ENCODE measurements at regions of chr12 and their contacts with region 1.

Region 1: DNA sequence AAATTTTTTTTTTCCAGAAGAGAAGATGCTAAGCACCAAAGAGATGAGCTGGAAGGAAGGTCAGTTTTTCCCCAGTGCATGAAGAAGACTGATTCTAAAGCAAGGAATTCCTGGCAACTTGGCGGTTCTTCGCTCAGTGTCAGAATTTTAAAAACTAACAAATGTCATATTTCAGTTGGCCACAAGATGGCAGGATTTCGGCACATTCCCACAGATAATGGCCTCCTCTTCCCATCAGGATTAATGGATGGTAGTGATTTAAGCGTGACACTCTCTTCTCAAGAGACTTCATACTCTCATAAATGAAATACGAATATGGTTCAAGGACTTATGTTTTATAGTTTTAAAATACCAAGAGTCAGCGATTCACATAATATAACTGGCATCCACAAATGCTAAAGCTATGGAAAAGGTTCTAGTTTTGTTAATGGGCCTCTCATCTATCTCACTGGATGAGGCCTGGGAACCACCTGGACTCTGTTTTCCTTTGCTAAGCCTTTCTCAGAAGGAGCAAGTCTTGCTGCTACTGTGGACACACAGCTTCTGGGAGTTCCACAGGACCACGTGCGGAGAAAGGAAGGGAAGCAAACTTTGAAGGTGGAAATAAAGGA is 46.1 kb upstream of the PTPRO start:
- DNase-seq: no peak

Region 2: GRCh38 chr12:14995583-14996425 is 280.4 kb before region 1 on chr12:
- intact Hi-C with region 1: loop called in 1 of 2 experiments (anchors 10 kb)
- DNase-seq: no peak

Region 3: GRCh38 chr12:15193946-15194345 is 82.2 kb before region 1 on chr12:
- intact Hi-C with region 1: no loop called
- DNase-seq: no peak

Region 4: DNA sequence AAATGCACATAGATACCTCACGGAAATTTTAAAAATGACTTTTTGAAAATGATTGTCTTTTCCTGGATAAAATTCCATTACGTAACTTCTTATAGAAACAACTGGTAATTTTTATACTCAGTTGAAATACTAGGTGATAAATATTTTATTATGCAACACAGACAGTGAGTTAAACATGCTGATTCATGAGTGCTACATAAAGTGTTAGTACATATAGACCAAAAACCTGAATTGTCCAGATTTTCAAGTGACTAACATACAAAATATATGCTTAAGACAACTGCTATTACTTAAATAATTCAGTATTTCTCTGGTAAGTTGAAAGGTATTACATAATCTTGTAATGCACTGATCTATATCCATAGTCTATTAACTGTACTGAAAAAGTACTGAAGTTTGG is 58.0 kb after region 1 on chr12:
- intact Hi-C with region 1: no loop called
- DNase-seq: no peak

Region 5: GRCh38 chr12:15522565-15523187 is 246.5 kb after region 1 on chr12:
- intact Hi-C with region 1: loop called in 1 of 2 experiments (anchors 2 kb)
- DNase-seq: no peak

Region 6: DNA sequence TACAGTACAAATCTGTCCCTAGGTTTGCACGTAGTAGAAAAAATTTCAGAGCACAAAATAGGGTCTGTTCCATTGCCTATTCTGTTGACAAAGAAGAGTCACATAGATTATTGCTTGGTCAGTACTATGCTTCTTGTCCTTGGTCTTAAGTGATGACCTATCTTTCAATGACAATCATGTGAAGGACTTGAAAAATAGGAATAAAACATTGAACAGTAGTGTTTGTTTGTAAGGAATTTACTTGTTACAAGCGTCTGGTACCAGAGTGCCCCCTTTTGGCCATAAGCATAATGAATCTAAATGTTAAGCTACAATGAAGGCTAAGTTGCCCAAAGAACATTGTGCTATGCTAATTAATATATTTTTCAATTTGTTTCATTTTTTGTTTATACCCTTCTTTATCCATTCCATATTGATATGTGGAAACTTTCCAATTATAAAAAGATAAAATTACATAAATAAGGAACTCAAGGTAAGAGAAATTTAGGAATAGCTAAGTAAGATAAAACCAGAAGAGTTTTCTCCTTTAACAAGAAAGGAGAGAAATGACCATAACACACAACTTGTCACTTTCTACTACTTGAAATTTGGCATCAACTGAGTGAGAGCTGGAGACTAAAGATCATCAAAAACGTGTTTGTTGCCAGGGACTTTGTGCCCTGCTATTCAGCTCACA is 308.3 kb after region 1 on chr12:
- intact Hi-C with region 1: loop called in 1 of 2 experiments (anchors 10 kb)
- DNase-seq: no peak